Endothelial cell of umbilical vein (primary cell): ENCODE measurements at regions of chr6 and their contacts with region 1.

Region 1: DNA sequence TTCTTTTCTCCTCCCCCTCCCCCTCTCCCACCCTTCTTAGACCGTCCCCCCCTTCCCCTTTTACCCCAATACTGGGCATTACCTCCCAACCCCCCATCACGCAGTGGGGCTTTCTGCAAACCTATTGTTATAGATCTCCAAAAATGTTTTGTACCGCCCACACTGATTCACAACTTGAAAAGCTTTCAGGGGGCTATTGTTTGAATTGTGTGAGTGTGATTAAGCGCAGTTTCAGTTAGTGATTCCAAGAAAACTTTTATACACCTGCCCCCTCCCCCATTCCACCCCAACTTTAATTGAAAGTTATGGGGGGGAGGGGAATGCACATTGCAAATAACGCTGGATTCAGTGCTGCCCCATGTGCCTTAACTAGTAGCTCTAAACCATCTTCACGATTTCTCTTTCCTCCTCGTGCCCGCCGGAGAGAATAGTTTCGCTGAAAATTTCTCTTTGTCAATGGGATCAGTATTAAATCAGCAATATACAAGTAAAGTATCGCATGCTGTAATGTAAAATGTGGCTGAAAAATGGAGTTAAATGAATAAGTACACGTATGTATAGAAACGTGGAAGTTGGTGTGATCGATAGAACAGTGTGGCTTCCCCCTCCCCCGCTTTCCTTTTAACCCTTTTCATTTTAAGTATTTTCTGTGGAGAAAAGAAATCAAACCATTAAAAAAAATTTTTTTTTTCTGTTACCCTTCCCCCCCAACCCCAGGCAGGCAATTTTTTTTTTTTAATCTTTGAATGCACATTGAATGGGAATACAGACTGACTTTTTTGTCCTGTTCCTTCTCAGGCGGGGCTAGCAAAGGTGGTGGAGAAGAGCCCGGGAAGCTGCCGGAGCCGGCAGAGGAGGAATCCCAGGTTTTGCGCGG is 632 bp downstream of the LIN28B start:
- DNase-seq: no peak
- H3K4me3 ChIP-seq: no peak overlapping the region
- H3K27ac ChIP-seq: no peak overlapping the region
- H3K4me1 ChIP-seq: peaks cover 6% of the 10 kb centered on the region
- H3K27me3 ChIP-seq: peaks cover 52 to 76% of the 10 kb centered on the region in 2 experiments
- CTCF ChIP-seq: no peak
- POLR2A ChIP-seq: no peak

Region 2: GRCh38 chr6:104969785-104970581 is 12.4 kb after region 1 on chr6:
- CTCF ChIA-PET with region 1: interaction called, 17 read pairs
- POLR2A ChIA-PET with region 1: no interaction called
- dilution Hi-C with region 1: no loop called
- intact Hi-C with region 1: no loop called
- DNase-seq: peak; percentile 22
- H3K4me3 ChIP-seq: no peak overlapping the region
- H3K27ac ChIP-seq: no peak overlapping the region
- H3K4me1 ChIP-seq: peaks cover 4% of the 10 kb centered on the region
- H3K27me3 ChIP-seq: no peaks in the 10 kb centered on the region
- CTCF ChIP-seq: no peak
- POLR2A ChIP-seq: no peak